ENCODE measurements at regions of chr1 and their contacts with region 1.

Region 1: GRCh38 chr1:171485375-171486047 is at the start of gene PRRC2C:
- DNase-seq: peak; percentile 92
- H3K4me3 Mint-ChIP-seq: peak within 1 kb of the TSS; percentile 93
- H3K27ac Mint-ChIP-seq: peak within 1 kb of the TSS; percentile 91
- H3K4me1 Mint-ChIP-seq: peaks cover 40% of the 10 kb centered on the region
- H3K27me3 Mint-ChIP-seq: no peaks in the 10 kb centered on the region
- total RNA-seq, gene PRRC2C: 269 and 286 TPM in 2 replicates

Region 2: DNA sequence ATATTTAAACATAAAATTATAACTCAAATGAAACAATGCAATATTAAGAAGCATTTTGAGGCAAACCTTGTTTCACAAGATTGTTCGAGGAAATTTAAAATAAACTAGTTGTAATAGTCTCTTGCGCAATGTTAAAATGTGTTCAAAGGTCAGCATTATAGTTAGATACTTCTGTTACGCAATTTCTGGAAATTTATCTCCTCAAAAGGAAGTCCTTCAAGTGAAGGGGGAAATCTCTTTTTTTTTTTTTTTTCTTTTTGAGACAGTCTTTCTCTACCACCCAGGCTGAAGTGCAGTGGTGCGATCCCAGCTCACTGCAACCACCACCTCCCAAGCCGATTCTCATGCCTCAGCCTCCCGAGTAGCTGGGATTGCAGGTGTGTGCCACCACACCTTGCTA is 119.4 kb before region 1 on chr1:
- intact Hi-C with region 1: no loop called
- DNase-seq: no peak
- H3K4me3 Mint-ChIP-seq: no peak overlapping the region
- H3K27ac Mint-ChIP-seq: no peak overlapping the region
- H3K4me1 Mint-ChIP-seq: no peaks in the 10 kb centered on the region
- H3K27me3 Mint-ChIP-seq: no peaks in the 10 kb centered on the region

Region 3: DNA sequence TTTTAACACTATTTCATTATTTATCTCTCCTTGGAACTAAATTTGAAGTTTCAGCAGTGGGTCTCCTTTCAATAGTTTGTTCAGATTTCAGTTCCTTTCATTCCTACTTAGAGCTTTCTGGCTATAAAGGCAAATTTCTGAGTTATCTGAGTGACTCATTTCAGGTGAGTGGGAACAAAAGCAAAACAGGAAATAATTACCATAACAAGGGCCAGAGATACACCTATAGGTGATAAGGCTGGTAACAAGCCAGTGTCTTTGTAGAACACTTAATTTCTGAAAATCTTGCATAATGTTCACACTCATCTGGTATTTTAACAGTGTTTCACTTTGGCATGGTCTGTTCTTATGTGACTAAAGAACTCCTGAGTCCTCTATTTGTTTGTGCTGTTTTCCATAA is 64.7 kb before region 1 on chr1:
- intact Hi-C with region 1: loop called (anchors 2 kb)
- DNase-seq: no peak
- H3K4me3 Mint-ChIP-seq: no peak overlapping the region
- H3K27ac Mint-ChIP-seq: peak overlapping the region; percentile 14
- H3K4me1 Mint-ChIP-seq: peaks cover 18% of the 10 kb centered on the region
- H3K27me3 Mint-ChIP-seq: no peaks in the 10 kb centered on the region

Region 4: DNA sequence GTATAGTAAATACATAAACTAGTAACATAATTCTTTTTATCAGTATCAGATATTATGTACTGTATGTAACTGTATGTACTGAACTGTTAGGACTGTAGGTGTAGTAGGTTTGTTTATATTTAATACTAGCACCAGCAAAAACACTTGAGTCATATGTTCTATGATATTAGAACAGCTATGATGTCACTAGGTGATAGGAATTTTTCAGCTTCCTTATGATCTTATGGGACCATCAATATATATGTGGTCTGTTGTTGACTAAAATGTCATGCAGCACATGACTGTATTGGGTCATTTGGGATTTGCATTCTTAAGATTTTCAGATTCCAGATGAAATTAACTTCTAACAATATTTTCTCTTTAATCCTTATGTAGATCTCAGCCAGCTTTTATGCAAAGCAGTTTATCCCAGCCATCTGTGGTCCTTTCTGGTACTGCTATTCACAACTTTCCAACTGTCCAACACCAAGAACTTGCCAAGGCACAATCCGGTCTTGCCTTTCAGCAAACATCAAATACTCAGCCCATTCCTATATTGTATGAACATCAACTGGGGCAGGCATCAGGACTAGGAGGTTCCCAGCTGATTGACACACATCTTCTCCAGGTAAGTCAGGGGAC is 98.2 kb after region 1 on chr1:
- intact Hi-C with region 1: loop called (anchors 5 kb)
- DNase-seq: no peak
- H3K4me3 Mint-ChIP-seq: no peak overlapping the region
- H3K27ac Mint-ChIP-seq: no peak overlapping the region
- H3K4me1 Mint-ChIP-seq: peaks cover 21% of the 10 kb centered on the region
- H3K27me3 Mint-ChIP-seq: no peaks in the 10 kb centered on the region

Region 5: DNA sequence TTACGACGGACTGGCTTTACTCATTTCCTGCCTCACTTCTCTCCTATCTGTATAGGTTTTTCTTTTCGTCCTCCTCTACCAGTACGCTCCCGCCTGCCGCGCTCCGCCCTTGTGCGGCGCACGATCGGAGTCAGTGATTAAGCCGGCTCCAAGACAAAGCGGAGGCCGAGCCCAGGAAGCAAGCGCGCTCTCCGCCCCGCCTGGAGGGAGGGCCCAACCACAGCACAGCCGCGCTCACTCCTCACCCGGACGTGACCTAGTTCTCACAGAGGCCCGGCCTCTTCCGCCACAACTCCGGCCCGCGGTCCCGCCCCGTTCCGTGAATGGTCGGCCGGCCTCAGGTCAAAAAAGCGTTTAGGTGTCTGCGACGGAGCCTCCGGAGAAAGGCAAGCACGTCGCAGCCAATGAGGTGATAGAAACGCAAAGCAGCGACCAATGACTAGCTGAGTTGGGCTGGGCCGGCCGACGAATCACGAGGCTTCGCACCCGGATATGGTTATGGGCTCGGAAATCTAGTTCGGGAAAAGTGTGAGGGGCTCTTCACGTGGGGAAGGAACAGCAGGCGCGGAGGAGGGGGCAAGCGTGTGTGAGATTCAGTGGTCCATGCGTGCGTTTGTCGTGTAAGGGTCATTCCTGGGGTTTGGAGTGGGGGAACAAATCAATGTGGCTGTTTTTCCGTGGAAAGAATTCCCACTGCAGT is 295.8 kb after region 1 on chr1 and contains the start of gene METTL13:
- intact Hi-C with region 1: loop called (anchors 2 kb)
- DNase-seq: peak; percentile 99
- H3K4me3 Mint-ChIP-seq: peak within 1 kb of the TSS; percentile 93
- H3K27ac Mint-ChIP-seq: peak within 1 kb of the TSS; percentile 92
- H3K4me1 Mint-ChIP-seq: peaks cover 36% of the 10 kb centered on the region
- H3K27me3 Mint-ChIP-seq: no peaks in the 10 kb centered on the region
- total RNA-seq, gene METTL13: 50.0 and 53.6 TPM in 2 replicates

Measured in activated T-helper 2 cell treated with anti-CD3 and anti-CD28 coated beads, Interferon-gamma antibody, Interleukin-2, Interleukin-4, amounts not matched to agents 10 μg/mL and 5 μg/mL and 100 μg/mL, durations not matched to agents 14 hours and 24 hours and 36 hours (primary cell).